Activated CD4-positive, alpha-beta T cell treated with anti-CD3 and anti-CD28 coated beads, Interleukin-2, amount 10 ng/mL, durations not matched to agents 24 days and 14 days (primary cell): ENCODE measurements at regions of chr11 and their contacts with region 1.

Region 1: DNA sequence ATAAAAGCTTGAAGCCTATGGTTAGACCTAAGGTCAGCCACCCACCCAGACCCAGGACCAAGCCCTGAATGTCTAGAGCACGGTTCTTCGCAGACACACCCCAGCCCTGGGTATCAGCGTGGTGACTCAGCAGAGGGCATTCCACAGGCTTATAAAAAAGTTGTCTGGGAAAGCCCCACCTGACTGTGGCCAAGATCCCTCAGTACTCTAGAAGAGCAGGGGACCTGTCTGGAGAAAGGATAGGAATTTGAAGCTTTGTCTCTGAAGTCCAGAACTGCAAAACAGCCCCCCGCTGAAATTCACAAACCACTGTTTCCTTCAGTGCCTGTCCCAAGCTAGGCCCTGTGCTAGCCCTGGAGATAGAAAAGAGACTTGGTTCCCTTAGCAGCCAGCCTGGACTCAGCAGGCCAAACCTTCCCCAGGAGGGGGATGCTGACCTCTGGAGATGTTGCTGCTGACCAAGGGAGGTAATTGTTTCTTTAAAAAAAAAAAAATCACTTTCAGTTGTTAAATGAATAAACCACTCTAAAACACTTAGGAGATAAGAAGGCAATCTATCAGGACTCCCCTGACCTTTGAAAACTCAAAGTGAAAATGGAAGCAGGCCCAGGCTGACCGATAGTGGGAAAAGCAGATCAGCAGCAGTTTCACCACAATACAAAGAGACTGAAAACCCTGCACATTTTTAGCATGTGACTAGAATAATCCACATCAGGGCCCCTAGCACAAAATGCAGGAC is 113.9 kb downstream of the ABTB2 start:
- DNase-seq: peak; percentile 82
- H3K4me3 Mint-ChIP-seq: peak overlapping the region; percentile 62
- H3K27ac Mint-ChIP-seq: peak overlapping the region; percentile 72
- H3K4me1 Mint-ChIP-seq: peaks cover 80% of the 10 kb centered on the region
- H3K27me3 Mint-ChIP-seq: no peaks in the 10 kb centered on the region

Region 2: DNA sequence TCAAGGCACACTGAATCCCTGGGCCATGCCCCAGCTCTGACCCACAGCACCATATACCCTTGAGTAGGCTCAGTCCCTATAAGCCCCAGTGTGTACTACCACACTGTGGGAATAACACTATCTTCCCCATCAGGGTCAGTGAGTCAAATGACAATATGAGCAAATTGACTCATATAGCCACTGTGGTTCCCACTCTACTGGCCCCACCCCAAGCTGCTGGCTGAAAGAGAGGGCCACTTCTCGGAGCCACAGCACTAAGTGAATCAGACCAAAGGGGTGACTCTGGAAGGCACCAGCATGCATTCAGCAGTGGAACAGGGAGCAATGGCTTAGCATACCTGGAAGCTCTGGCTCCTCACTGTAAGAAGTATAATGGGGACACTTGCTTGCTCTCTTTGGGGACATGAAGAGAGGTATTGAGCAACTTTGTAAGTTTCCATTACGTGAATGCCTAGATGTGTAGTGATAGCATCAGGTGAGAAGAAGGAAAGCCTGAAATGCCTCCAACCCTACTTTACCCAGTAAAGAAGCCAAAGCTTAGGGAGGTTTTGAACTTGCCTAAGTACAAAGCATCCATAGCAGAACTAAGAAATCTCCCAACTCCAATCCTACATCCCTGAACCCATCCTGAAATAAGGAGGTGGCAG is 521.2 kb before region 1 on chr11:
- intact Hi-C with region 1: loop called (anchors 10 kb)
- DNase-seq: peak; percentile 76
- H3K4me3 Mint-ChIP-seq: peak overlapping the region; percentile 62
- H3K27ac Mint-ChIP-seq: peak overlapping the region; percentile 88
- H3K4me1 Mint-ChIP-seq: peaks cover 60% of the 10 kb centered on the region
- H3K27me3 Mint-ChIP-seq: peaks cover 2% of the 10 kb centered on the region

Region 3: GRCh38 chr11:33893711-33894397 is 350.0 kb before region 1 on chr11:
- intact Hi-C with region 1: loop called (anchors 10 kb)
- DNase-seq: peak; percentile 83
- H3K4me3 Mint-ChIP-seq: peak overlapping the region; percentile 66
- H3K27ac Mint-ChIP-seq: peak overlapping the region; percentile 50
- H3K4me1 Mint-ChIP-seq: peaks cover 15% of the 10 kb centered on the region
- H3K27me3 Mint-ChIP-seq: peaks cover 68% of the 10 kb centered on the region

Region 4: DNA sequence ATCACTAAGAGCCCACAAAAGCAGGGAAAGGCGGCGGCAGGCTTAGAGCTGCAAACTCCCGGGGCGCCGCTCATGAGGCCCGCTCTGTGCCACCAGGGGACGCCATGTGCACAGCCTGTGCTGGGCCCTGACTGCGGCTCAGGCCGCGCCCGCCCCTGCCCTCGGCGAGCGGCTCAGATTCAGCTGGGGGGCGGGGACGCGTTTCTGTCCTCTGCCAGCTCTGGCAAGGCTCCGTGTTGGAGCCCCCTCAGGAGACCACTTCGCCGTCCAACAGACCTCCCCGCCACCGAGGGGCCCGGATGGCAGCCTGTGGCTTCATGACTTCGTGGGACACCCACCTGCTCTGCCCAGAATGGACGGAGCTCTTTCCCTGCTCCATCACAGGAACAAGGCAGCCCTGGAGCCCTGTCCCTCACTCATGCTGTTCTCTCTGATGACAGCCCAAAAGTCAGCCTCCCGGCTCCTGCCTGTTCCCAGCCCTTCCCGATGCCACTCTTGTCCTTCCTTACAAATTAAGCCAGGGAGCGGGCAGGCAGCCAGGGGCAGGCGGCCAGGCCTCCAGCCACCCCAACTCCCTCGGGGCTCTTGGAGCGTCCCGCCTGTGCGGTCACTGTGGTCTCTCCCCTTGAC is 69.4 kb before region 1 on chr11:
- intact Hi-C with region 1: loop called (anchors 1 kb)
- DNase-seq: peak; percentile 95
- H3K4me3 Mint-ChIP-seq: peak overlapping the region; percentile 79
- H3K27ac Mint-ChIP-seq: peak overlapping the region; percentile 53
- H3K4me1 Mint-ChIP-seq: peaks cover 17% of the 10 kb centered on the region
- H3K27me3 Mint-ChIP-seq: peaks cover 7% of the 10 kb centered on the region

Region 5: GRCh38 chr11:34214961-34215805 is 28.7 kb before region 1 on chr11:
- intact Hi-C with region 1: loop called (anchors 1 kb)
- DNase-seq: peak; percentile 74
- H3K4me3 Mint-ChIP-seq: peak overlapping the region; percentile 30
- H3K27ac Mint-ChIP-seq: peak overlapping the region; percentile 91
- H3K4me1 Mint-ChIP-seq: peaks cover 12% of the 10 kb centered on the region
- H3K27me3 Mint-ChIP-seq: peaks cover 7% of the 10 kb centered on the region